WTC11 (cell line): ENCODE measurements at regions of chr19 and their contacts with region 1.

Region 1: GRCh38 chr19:29478578-29479565 is 46.9 kb upstream of the VSTM2B start:
- DNase-seq: peak; percentile 90
- ATAC-seq: peak; percentile 100
- H3K4me3 Mint-ChIP-seq: no peak overlapping the region
- H3K27ac Mint-ChIP-seq: no peak overlapping the region
- H3K4me1 Mint-ChIP-seq: no peaks in the 10 kb centered on the region
- H3K27me3 Mint-ChIP-seq: peaks cover 12% of the 10 kb centered on the region
- CTCF ChIP-seq: peak; percentile 39; the same call in 1 of the 2 replicates

Region 2: GRCh38 chr19:29278716-29279115 is 200.2 kb before region 1 on chr19:
- CTCF ChIA-PET with region 1: interaction called, 12 read pairs
- POLR2A ChIA-PET with region 1: no interaction called
- DNase-seq: no peak
- ATAC-seq: peak; percentile 25; the same call in 1 of the 2 replicates
- H3K4me3 Mint-ChIP-seq: no peak overlapping the region
- H3K27ac Mint-ChIP-seq: no peak overlapping the region
- H3K4me1 Mint-ChIP-seq: peaks cover 12% of the 10 kb centered on the region
- H3K27me3 Mint-ChIP-seq: no peaks in the 10 kb centered on the region
- CTCF ChIP-seq: no peak

Region 3: GRCh38 chr19:29415507-29415906 is 63.4 kb before region 1 on chr19:
- CTCF ChIA-PET with region 1: interaction called, 11 read pairs
- POLR2A ChIA-PET with region 1: no interaction called
- DNase-seq: peak; percentile 54
- ATAC-seq: peak; percentile 68
- H3K4me3 Mint-ChIP-seq: no peak overlapping the region
- H3K27ac Mint-ChIP-seq: no peak overlapping the region
- H3K4me1 Mint-ChIP-seq: no peaks in the 10 kb centered on the region
- H3K27me3 Mint-ChIP-seq: no peaks in the 10 kb centered on the region
- CTCF ChIP-seq: no peak

Region 4: DNA sequence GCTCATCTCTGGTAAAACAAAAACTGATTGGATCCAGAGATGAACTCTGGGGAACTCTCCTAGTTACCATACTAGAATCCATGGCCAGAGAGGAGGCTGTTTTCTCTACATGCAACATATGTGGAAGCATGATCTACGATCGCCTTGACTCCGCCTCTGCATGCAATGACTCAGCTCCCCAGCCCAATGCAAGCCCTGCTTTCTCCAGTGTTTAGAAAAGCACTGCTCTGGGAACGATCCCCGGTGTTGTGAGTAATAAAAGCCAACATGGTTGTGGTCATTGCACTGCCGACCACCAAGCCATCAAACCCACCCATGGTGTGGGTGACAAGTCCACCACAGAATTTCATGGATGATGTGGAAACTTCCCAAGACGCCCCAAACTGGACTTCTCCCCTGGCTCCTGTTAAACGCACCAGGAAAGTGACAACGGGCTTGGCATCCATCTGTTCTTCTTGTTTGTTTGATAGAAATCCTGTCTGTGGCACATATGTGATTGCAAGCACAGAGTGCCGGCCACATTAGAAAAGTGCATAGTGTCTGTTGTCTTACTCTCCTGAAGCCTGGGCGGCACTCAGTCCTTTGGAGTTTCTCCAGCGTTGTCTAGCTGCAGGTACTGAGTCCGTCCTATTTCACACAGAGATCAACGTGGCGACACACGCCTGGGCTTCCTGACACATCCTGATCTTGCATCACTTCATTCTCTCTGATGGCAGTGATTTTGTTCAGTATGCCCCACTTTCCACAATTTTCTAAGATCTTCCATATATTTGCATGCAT is 10.5 kb after region 1 on chr19:
- CTCF ChIA-PET with region 1: interaction called, 10 read pairs
- POLR2A ChIA-PET with region 1: interaction called, 5 read pairs
- DNase-seq: no peak
- ATAC-seq: no peak
- H3K4me3 Mint-ChIP-seq: no peak overlapping the region
- H3K27ac Mint-ChIP-seq: no peak overlapping the region
- H3K4me1 Mint-ChIP-seq: peaks cover 25% of the 10 kb centered on the region
- H3K27me3 Mint-ChIP-seq: peaks cover 8% of the 10 kb centered on the region
- CTCF ChIP-seq: no peak

Region 5: GRCh38 chr19:29510701-29511265 is 31.9 kb after region 1 on chr19:
- CTCF ChIA-PET with region 1: interaction called, 13 read pairs
- POLR2A ChIA-PET with region 1: no interaction called
- DNase-seq: peak; percentile 54
- ATAC-seq: peak; percentile 83
- H3K4me3 Mint-ChIP-seq: no peak overlapping the region
- H3K27ac Mint-ChIP-seq: no peak overlapping the region
- H3K4me1 Mint-ChIP-seq: peaks cover 9% of the 10 kb centered on the region
- H3K27me3 Mint-ChIP-seq: peaks cover 11% of the 10 kb centered on the region
- CTCF ChIP-seq: no peak